T-cell (primary cell): ENCODE measurements at regions of chr2 and their contacts with region 1.

Region 1: DNA sequence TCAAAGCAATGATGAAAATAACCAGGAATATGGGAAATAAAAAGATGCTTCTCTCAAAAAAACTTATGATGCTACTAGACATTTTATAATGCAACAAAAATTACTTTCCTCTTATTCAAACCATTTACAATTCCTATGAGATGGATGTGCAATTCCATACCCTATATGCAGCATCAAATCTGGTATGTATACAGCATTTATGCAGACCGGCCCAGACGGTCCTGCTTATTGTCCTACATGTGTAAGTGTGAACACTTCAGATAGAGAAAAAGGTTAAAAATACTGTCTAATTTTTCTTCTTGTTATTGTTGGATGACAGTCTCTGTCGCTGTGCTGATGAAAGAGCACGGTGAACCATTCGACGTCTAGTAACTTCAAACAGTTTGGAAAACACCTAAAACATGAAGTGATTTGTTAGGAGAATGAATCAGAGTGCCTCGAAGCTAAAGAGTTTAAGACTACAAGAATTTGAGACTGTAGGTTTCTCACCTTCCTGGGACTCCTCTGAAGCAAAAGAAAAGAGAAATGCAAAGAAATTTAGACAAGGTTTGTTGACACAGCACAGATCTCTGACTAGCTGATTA is 80.8 kb downstream of the ATL2 start:
- DNase-seq: peak in 1 of 35 experiments; percentile 9
- ATAC-seq: peak in 1 of 4 experiments; percentile 56
- H3K4me3 ChIP-seq: no peak overlapping the region
- H3K4me3 Mint-ChIP-seq: no peak overlapping the region
- H3K27ac ChIP-seq: no peak overlapping the region
- H3K27ac Mint-ChIP-seq: no peak overlapping the region
- H3K4me1 ChIP-seq: no peaks in the 10 kb centered on the region
- H3K4me1 Mint-ChIP-seq: peaks cover 3 to 4% (median 3%) of the 10 kb centered on the region in 3 donors
- H3K27me3 ChIP-seq: no peaks in the 10 kb centered on the region
- H3K27me3 Mint-ChIP-seq: no peaks in the 10 kb centered on the region

Region 2: GRCh38 chr2:38362232-38362631 is 65.9 kb after region 1 on chr2:
- CTCF ChIA-PET with region 1: no interaction called
- POLR2A ChIA-PET with region 1: no interaction called
- DNase-seq: no peak
- ATAC-seq: no peak
- H3K4me3 ChIP-seq: no peak overlapping the region
- H3K4me3 Mint-ChIP-seq: no peak overlapping the region
- H3K27ac ChIP-seq: no peak overlapping the region
- H3K27ac Mint-ChIP-seq: no peak overlapping the region
- H3K4me1 ChIP-seq: no peaks in the 10 kb centered on the region
- H3K4me1 Mint-ChIP-seq: peaks cover 40 to 51% (median 50%) of the 10 kb centered on the region in 3 donors
- H3K27me3 ChIP-seq: no peaks in the 10 kb centered on the region
- H3K27me3 Mint-ChIP-seq: no peaks in the 10 kb centered on the region

Region 3: GRCh38 chr2:38448692-38449410 is 152.6 kb after region 1 on chr2:
- CTCF ChIA-PET with region 1: interaction called in 1 of 2 experiments, 11 read pairs
- POLR2A ChIA-PET with region 1: no interaction called
- DNase-seq: no peak
- ATAC-seq: no peak
- H3K4me3 ChIP-seq: no peak overlapping the region
- H3K4me3 Mint-ChIP-seq: no peak overlapping the region
- H3K27ac ChIP-seq: no peak overlapping the region
- H3K27ac Mint-ChIP-seq: no peak overlapping the region
- H3K4me1 ChIP-seq: no peaks in the 10 kb centered on the region
- H3K4me1 Mint-ChIP-seq: no peaks in the 10 kb centered on the region
- H3K27me3 ChIP-seq: no peaks in the 10 kb centered on the region
- H3K27me3 Mint-ChIP-seq: no peaks in the 10 kb centered on the region

Region 4: GRCh38 chr2:38797276-38797675 is 501.0 kb after region 1 on chr2:
- CTCF ChIA-PET with region 1: no interaction called
- POLR2A ChIA-PET with region 1: no interaction called
- DNase-seq: no peak
- ATAC-seq: no peak
- H3K4me3 ChIP-seq: no peak overlapping the region
- H3K4me3 Mint-ChIP-seq: no peak overlapping the region
- H3K27ac ChIP-seq: no peak overlapping the region
- H3K27ac Mint-ChIP-seq: no peak overlapping the region
- H3K4me1 ChIP-seq: no peaks in the 10 kb centered on the region
- H3K4me1 Mint-ChIP-seq: no peaks in the 10 kb centered on the region
- H3K27me3 ChIP-seq: no peaks in the 10 kb centered on the region
- H3K27me3 Mint-ChIP-seq: no peaks in the 10 kb centered on the region